ENCODE measurements at regions of chr3 and their contacts with region 1.

Region 1: DNA sequence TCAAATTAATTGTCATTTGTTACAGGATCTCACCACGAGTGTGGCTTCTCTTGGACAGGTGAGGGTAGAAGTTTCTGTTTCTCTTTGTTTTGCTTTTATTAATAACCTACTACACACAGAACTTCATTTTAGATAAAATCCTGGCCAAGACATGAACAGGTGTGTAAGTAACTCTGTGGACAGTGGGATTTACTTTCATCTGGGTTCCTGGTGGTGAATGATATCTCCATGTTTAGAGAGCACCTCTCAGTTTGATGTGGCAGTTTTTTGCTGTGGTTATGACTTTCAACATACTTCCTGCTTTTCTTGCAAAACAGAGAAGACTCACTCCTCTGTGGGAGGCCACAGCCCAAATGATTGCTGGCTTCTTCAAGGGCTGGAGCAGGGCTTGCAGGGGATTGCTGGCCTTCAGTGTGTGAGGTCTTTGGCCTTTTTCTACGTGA is 71.1 kb upstream of the XCR1 start:
- DNase-seq: peak in 1 of 2 donors; percentile 34
- ATAC-seq: peak in 7 of 8 donors; percentile 34 to 80 (median 55)
- H3K4me3 ChIP-seq: no peak overlapping the region
- H3K27ac ChIP-seq: peak overlapping the region in 9 of 10 donors; percentile 49 to 90 (median 70)
- H3K4me1 ChIP-seq: peaks cover 0 to 82% (median 0%) of the 10 kb centered on the region in 9 donors
- H3K27me3 ChIP-seq: no peaks in the 10 kb centered on the region
- CTCF ChIP-seq: no peak

Region 2: GRCh38 chr3:45938864-45939263 is 159.5 kb before region 1 on chr3:
- intact Hi-C with region 1: no loop called
- DNase-seq: peak; percentile 59 to 82
- ATAC-seq: peak; percentile 72 to 89 (median 84)
- H3K4me3 ChIP-seq: no peak overlapping the region
- H3K27ac ChIP-seq: no peak overlapping the region
- H3K4me1 ChIP-seq: peaks cover 2 to 44% (median 24%) of the 10 kb centered on the region in 9 donors
- H3K27me3 ChIP-seq: no peaks in the 10 kb centered on the region
- CTCF ChIP-seq: peak; percentile 74 to 93 (median 89)

Region 3: DNA sequence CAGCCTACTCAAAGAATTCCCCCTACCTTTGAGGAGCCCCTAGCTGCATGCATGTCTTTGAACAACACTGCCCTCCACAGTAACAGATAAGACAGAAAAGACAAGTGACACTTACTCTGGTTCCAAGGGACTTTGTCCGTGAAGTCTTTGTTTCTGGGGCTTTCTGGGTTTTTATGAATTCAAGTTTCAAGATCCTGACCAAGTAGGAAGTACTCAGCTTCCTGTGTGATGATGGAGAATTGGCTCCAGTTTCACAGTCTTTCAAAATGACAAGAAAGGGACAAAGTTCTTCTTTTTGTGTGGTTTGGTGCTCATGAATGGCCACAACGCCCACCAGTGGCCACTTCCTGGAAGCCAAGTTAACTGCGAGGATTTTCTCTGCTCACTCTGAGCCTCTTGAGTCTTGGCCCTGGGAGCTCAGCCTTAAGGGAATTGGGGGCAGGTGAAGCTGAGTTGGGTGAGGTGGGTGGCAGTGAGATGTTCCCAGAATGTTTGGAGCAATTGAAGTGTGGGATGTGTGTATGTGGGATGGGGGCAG is 109.9 kb after region 1 on chr3 and contains the start of gene CCR1:
- intact Hi-C with region 1: loop called in 2 of 10 experiments (anchors 5 to 10 kb)
- DNase-seq: peak in 1 of 2 donors; percentile 36
- ATAC-seq: peak in 7 of 8 donors; percentile 29 to 77 (median 43)
- H3K4me3 ChIP-seq: peak within 1 kb of the TSS in 7 of 10 donors; percentile 18 to 60 (median 30)
- H3K27ac ChIP-seq: peak within 1 kb of the TSS in 5 of 10 donors; percentile 30 to 90 (median 46)
- H3K4me1 ChIP-seq: peaks cover 0 to 52% (median 0%) of the 10 kb centered on the region in 9 donors
- H3K27me3 ChIP-seq: peaks cover 0 to 6% (median 0%) of the 10 kb centered on the region in 7 donors
- CTCF ChIP-seq: peak in 5 of 9 donors; percentile 6 to 54 (median 34)
- total RNA-seq, gene CCR1: 0.66 to 24.9 (median 1.8) TPM

Region 4: GRCh38 chr3:46266598-46266997 is 168.3 kb after region 1 on chr3:
- intact Hi-C with region 1: no loop called
- DNase-seq: no peak
- ATAC-seq: no peak
- H3K4me3 ChIP-seq: no peak overlapping the region
- H3K27ac ChIP-seq: no peak overlapping the region
- H3K4me1 ChIP-seq: no peaks in the 10 kb centered on the region
- H3K27me3 ChIP-seq: peaks cover 0 to 19% (median 0%) of the 10 kb centered on the region in 7 donors
- CTCF ChIP-seq: no peak

Region 5: DNA sequence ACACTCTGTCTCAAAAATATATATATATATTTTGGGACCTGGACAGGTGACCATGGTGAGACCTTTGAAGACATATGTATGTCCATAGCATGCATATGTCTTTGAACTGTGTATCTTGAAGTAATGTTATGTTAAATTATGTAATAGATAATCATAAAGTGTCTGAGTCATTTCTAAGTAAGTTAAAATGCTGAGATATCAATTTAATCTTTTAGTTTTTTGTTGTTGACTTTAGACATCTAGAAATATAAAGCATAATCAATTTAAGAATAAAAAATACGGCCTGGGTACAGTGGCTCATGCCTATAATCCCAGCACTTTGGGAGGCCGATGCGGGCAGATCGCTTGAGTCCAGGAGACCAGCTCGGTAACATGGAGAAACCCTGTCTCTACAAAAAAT is 1078.2 kb after region 1 on chr3:
- intact Hi-C with region 1: no loop called
- DNase-seq: no peak
- ATAC-seq: no peak
- H3K4me3 ChIP-seq: no peak overlapping the region
- H3K27ac ChIP-seq: no peak overlapping the region
- H3K4me1 ChIP-seq: no peaks in the 10 kb centered on the region
- H3K27me3 ChIP-seq: no peaks in the 10 kb centered on the region
- CTCF ChIP-seq: no peak